Left cardiac atrium (tissue), 4 donors: ENCODE measurements at regions of chr11 and their contacts with region 1.

Region 1: DNA sequence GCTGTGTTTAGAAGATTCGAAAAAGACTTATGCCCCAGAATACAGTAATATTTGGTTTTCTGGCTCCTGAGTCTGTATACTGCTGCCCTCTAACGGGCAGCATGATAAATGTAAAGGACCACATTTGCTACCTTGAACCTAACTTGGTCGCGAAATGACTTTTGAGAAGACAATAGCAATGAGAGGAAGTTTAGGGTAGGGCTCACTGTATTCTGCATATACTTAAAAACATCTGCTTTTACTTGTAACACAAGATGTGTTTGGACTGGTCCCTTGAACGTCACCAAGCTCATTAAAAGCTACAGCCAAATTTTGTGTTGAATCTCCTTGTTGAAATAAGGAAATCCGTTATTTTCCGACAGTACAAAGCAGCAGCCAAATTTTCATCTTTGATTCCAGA is 309.1 kb downstream of the SWAP70 start:
- DNase-seq: no peak
- ATAC-seq: peak; percentile 78

Region 2: DNA sequence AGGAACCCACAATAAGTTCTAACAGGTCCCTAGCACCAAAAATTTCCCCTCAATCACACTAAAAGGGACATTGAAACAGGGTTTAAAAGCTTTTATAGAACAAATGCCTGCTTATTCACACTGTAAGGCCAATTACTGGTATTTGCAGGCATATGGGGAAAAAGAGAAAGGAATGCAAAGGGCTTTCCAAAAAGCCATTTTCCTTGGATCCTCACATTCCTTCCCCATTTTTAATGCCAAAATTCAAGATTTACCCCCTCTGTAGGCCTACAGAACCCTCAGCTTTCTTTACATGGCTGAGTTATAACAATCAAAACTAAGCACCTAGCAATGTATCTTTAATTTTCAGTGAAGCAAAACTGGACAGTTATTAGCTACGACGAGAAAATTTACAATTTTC is 219.0 kb after region 1 on chr11:
- intact Hi-C with region 1: no loop called
- DNase-seq: no peak
- ATAC-seq: no peak

Region 3: DNA sequence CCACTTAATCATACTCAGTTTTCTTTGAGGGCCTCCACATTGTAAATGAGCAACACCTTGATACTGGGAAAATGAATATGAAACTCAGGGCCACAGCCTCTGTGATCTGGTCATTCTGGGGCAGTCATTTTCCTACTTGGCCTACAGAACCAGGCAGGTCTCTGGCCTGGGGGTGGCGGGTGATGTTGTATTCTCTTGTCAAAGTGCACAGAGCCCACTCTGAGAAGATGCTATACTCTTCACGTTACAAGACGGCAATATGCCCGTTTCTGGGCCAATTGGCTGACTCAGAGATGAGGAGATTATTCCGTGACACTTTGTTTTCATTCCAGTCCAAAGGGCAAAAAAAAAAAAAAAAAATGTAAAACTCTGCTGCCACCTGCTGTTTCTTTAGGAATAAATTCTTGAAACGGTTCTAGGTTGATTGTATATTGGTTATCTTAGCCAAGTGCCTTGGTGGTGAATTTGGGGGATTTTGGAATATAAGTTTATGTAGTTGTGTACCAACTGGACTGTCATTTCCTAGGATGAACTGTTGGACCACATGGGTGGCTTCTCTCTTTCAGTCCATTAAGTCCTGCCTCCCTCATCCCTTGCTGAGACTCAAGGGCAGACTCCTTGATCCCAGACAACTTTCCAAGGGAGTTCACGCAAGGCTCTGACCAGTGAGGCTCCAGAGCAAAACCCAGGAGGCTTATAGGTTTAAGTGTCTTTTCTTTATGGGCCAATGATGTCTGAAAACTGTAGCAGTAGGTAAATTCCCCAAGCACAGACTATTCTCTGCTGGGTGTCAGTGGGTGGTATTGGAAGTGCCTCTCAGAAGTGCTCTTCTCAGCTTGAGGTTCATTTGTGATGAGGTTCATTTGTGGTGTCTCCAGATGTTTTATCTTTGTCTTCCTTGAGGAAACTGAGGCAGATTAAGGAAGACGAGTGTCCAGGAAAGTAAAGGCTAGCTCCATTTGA is 350.1 kb after region 1 on chr11:
- intact Hi-C with region 1: loop called in 1 of 2 experiments (anchors 10 kb)
- DNase-seq: peak; percentile 58
- ATAC-seq: peak; percentile 30 to 68